Activated CD8-positive, alpha-beta T cell treated with anti-CD3 and anti-CD28 coated beads for 36 hours (primary cell): ENCODE measurements at regions of chr14 and their contacts with region 1.

Region 1: DNA sequence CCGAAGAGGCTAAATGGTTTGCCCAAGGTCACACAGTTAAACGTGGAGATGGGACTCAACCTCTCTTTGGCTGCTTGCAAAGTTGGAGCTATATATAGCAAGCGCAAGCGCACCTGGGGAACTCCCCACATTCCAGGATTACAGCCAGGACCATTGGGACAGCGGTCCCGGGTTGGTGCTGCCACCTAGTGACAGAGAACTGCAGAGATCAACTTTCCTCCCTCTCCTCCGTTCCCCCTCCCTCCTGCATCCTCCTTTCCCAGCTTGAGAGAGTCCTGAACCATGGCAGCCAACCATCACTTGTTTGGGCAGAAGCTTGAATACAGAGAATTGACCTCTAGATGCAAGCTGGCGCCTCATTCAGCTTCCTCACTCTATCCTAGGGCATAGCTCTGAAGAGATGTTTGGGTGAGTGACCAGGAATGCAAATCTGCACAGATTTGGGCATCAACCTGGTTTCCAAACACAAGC is 17.4 kb upstream of the FLVCR2 start:
- DNase-seq: peak; percentile 49
- ATAC-seq: no peak
- H3K4me3 Mint-ChIP-seq: peak overlapping the region; percentile 20
- H3K27ac Mint-ChIP-seq: peak overlapping the region; percentile 32
- H3K4me1 Mint-ChIP-seq: peaks cover 67% of the 10 kb centered on the region
- H3K27me3 Mint-ChIP-seq: no peaks in the 10 kb centered on the region
- CTCF ChIP-seq: peak; percentile 78

Region 2: DNA sequence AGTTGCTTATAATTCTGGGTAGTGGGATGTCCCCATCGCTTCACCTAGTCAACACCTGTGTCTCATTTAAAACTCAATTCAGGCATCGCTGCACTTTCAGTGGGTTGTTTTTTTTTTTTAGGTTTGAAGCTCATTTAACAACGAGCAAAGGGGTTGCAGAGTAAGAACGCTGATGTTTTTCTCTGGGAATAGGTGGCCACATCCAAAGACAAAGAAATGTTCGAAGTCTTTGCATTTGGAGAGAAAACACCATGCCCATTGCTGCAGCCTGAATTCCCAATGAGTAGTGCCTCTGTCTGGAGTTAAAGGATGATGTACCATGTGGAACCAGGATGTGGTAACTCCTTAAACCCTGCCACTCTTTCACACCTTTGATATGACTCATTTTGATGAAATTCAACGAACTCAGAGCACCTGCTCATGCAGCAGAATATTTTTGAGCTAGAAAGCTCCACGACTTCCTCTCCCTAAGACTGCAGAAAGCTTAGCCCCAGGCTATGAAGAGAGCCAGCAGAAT is 73.8 kb before region 1 on chr14:
- CTCF ChIA-PET with region 1: interaction called, 30 read pairs
- POLR2A ChIA-PET with region 1: interaction called, 7 read pairs
- intact Hi-C with region 1: loop called (anchors 5 kb)
- DNase-seq: peak; percentile 32
- ATAC-seq: peak; percentile 86
- H3K4me3 Mint-ChIP-seq: no peak overlapping the region
- H3K27ac Mint-ChIP-seq: no peak overlapping the region
- H3K4me1 Mint-ChIP-seq: peaks cover 20% of the 10 kb centered on the region
- H3K27me3 Mint-ChIP-seq: no peaks in the 10 kb centered on the region
- CTCF ChIP-seq: no peak

Region 3: DNA sequence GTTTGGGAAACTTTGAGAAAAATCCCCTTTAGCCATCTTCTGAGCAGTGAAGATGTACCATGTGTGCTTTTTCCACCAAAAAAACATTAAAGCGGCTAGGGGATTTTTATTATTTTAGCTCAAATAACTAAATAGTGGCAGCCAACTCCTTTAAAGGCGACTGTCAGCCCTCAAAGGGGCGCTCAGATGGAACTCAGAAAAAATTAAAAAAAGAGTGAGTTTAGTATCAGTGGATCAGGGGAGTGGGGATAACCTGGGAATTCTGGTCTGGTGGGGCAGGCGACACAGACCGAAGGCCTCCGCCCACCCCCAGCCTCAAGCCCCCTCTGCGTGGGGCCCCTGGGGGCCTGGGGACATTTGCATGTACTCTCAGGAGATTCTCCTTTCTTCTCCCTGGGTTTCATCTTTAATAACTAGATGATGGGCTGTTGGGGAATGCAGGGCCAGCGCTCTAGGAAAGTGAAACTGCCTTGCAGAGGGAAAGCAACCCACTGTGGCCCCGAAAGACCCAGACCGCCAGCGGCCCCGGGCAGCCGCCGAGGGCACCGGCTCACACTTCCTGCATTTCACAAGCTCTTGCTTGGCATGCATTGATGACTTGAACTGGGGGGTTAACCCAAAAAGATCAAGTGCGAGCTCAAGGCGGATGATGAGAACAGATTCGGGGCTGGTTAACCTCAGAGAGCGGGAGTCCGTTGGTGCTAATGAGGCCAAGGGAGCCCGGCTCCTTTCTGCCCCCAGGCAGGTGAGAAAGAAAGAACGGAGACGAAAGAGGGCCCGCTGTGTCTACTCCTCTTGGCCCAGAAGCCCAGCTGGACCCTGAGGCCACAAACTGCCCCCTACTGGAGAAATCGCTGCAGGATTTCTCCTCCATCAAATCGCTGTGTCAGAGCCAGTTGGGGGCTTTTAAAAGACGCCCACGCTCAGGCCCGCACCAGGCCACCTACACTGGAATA is 46.0 kb before region 1 on chr14:
- CTCF ChIA-PET with region 1: interaction called, 87 read pairs
- POLR2A ChIA-PET with region 1: interaction called, 5 read pairs
- intact Hi-C with region 1: no loop called
- DNase-seq: peak; percentile 66
- ATAC-seq: peak; percentile 67
- H3K4me3 Mint-ChIP-seq: peak overlapping the region; percentile 68
- H3K27ac Mint-ChIP-seq: peak overlapping the region; percentile 93
- H3K4me1 Mint-ChIP-seq: peaks cover 42% of the 10 kb centered on the region
- H3K27me3 Mint-ChIP-seq: no peaks in the 10 kb centered on the region
- CTCF ChIP-seq: peak; percentile 51

Region 4: GRCh38 chr14:75527449-75528163 is 33.4 kb before region 1 on chr14:
- CTCF ChIA-PET with region 1: interaction called, 87 read pairs
- POLR2A ChIA-PET with region 1: interaction called, 12 read pairs
- intact Hi-C with region 1: loop called (anchors 1 kb)
- DNase-seq: no peak
- ATAC-seq: no peak
- H3K4me3 Mint-ChIP-seq: no peak overlapping the region
- H3K27ac Mint-ChIP-seq: peak overlapping the region; percentile 9
- H3K4me1 Mint-ChIP-seq: peaks cover 68% of the 10 kb centered on the region
- H3K27me3 Mint-ChIP-seq: no peaks in the 10 kb centered on the region
- CTCF ChIP-seq: no peak

Region 5: DNA sequence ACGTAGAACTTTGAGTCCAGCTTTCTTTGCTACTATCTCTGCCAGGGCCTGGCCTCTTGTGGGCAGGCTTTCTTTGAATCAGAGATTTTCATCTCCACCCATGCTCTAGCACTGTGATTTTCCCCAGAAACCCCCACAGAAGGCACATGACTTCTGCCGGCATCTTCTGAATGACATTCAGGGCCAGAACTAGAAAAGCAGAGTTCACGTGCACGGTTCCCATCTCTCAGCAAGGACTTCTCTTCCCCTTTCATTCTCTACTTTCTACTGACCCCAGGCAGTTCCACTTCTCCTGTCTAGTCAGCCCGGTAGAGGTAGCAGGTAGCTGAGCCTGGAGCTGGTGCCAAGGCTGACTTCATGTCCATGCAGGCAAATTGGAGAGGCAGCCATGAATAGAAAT is 11.8 kb before region 1 on chr14:
- CTCF ChIA-PET with region 1: interaction called, 17 read pairs
- POLR2A ChIA-PET with region 1: interaction called, 27 read pairs
- intact Hi-C with region 1: no loop called
- DNase-seq: peak; percentile 49
- ATAC-seq: peak; percentile 78
- H3K4me3 Mint-ChIP-seq: no peak overlapping the region
- H3K27ac Mint-ChIP-seq: peak overlapping the region; percentile 43
- H3K4me1 Mint-ChIP-seq: peaks cover 33% of the 10 kb centered on the region
- H3K27me3 Mint-ChIP-seq: no peaks in the 10 kb centered on the region
- CTCF ChIP-seq: no peak

Region 6: DNA sequence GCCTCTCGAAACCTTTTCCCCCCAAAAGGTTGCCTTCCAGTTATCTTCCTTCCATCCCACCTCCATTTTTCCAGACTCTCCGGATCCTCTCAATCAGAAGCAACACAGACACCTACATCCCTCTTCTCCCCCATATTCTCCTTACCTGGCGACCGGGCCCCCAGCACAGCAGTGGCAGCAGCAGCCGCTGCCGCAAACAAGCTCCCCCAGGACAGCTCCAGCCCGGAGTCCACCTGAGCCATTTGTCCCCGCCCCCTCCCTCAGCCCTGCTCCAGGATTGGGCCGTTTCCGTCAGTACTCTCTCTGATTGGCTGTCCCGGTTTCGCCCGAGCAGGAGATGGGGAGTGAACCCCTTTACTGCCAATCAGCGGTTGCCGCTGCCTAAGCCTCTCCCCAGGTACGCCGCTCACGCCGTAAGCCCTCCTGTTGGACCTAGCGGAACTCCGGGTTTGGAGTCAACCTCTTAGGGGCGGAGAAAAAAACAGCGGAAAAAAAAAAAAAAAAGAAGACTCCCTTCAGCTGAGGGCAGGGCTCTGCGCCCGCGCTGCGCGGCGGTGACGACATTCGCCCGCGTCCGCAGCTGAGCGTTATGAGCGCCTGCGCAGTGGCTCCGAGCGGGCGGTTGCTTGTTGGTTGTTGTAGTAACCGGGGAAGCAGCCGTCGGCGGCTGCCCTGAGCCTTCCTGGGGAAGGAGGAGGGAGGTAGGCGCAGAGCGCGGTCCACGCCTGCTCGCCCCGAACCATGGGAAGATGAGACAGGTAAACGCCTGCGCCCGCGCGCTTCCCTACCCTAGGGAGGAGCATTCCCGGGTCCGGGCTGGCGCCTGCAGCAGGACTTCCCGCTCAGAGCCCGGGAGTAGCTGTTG is 99.9 kb after region 1 on chr14 and contains the starts of genes ERG28 and TTLL5:
- CTCF ChIA-PET with region 1: interaction called, 13 read pairs
- POLR2A ChIA-PET with region 1: interaction called, 5 read pairs
- intact Hi-C with region 1: no loop called
- DNase-seq: peak; percentile 97
- ATAC-seq: peak; percentile 97
- H3K4me3 Mint-ChIP-seq: peak within 1 kb of the TSS; percentile 86
- H3K27ac Mint-ChIP-seq: peak within 1 kb of the TSS; percentile 91
- H3K4me1 Mint-ChIP-seq: peaks cover 17% of the 10 kb centered on the region
- H3K27me3 Mint-ChIP-seq: no peaks in the 10 kb centered on the region
- CTCF ChIP-seq: no peak
- total RNA-seq, gene ERG28: 13.4 to 14.9 TPM
- total RNA-seq, gene TTLL5: 23.6 to 27.2 TPM